Thyroid gland (tissue), 4 donors: ENCODE measurements at regions of chr6 and their contacts with region 1.

Region 1: GRCh38 chr6:217048-217659 is 75.1 kb upstream of the DUSP22 start:
- DNase-seq: no peak
- H3K4me3 ChIP-seq: no peak overlapping the region
- H3K27ac ChIP-seq: no peak overlapping the region
- H3K4me1 ChIP-seq: peaks cover 0 to 8% of the 10 kb centered on the region in 2 donors
- H3K27me3 ChIP-seq: no peaks in the 10 kb centered on the region
- CTCF ChIP-seq: peak in 2 of 6 experiments; percentile 11 to 27
- POLR2A ChIP-seq: no peak

Region 2: DNA sequence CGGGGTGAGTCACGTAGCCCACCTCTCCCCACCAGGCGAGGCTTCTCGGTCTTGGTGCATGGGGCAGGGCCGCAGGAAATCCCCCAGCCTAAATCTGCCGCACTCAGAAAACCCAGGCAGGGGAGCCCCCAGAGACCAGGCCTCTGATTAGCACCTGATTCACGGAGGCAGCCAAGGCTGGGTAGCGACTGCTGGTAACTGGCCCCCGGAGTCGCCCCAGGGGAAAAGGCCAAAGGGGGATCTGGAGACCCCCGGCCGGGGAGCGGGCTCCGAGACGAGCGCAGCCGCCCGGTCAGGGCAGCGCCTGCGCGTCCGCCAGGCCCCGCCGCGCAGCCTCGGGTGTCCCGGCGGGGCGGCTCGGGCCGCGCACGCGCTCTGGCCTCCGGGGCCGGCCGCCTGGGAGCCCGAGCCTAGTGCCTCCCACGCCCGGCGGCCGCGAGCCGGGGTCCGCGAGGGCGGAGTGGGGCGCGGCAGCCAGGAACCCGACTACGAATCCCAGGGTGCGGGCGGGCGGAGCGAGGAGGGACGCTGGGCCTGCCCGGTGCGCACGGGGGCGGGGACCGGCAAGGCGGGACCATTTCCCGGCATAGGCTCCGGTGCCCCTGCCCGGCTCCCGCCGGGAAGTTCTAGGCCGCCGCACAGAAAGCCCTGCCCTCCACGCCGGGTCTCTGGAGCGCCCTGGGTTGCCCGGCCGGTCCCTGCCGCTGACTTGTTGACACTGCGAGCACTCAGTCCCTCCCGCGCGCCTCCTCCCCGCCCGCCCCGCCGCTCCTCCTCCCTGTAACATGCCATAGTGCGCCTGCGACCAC is 74.7 kb after region 1 on chr6 and contains the start of gene DUSP22:
- intact Hi-C with region 1: no loop called
- DNase-seq: peak; percentile 93 to 94
- H3K4me3 ChIP-seq: peak within 1 kb of the TSS; percentile 25 to 72 (median 54)
- H3K27ac ChIP-seq: peak within 1 kb of the TSS; percentile 94 to 97 (median 96)
- H3K4me1 ChIP-seq: peaks cover 19 to 23% of the 10 kb centered on the region in 2 donors
- H3K27me3 ChIP-seq: no peaks in the 10 kb centered on the region
- CTCF ChIP-seq: no peak
- POLR2A ChIP-seq: peak; percentile 73 to 89
- total RNA-seq, gene DUSP22: 40.4 to 68.8 (median 59.4) TPM

Region 3: GRCh38 chr6:389622-390021 is 172.5 kb after region 1 on chr6:
- intact Hi-C with region 1: loop called (anchors 10 kb)
- DNase-seq: no peak
- H3K4me3 ChIP-seq: no peak overlapping the region
- H3K27ac ChIP-seq: no peak overlapping the region
- H3K4me1 ChIP-seq: peaks cover 13 to 38% of the 10 kb centered on the region in 2 donors
- H3K27me3 ChIP-seq: peaks cover 18% of the 10 kb centered on the region
- CTCF ChIP-seq: no peak
- POLR2A ChIP-seq: no peak

Region 4: GRCh38 chr6:624979-625378 is 407.8 kb after region 1 on chr6:
- intact Hi-C with region 1: no loop called
- DNase-seq: no peak
- H3K4me3 ChIP-seq: no peak overlapping the region
- H3K27ac ChIP-seq: no peak overlapping the region
- H3K4me1 ChIP-seq: no peaks in the 10 kb centered on the region
- H3K27me3 ChIP-seq: no peaks in the 10 kb centered on the region
- CTCF ChIP-seq: no peak
- POLR2A ChIP-seq: no peak